ENCODE measurements at regions of chr19 and their contacts with region 1.

Region 1: DNA sequence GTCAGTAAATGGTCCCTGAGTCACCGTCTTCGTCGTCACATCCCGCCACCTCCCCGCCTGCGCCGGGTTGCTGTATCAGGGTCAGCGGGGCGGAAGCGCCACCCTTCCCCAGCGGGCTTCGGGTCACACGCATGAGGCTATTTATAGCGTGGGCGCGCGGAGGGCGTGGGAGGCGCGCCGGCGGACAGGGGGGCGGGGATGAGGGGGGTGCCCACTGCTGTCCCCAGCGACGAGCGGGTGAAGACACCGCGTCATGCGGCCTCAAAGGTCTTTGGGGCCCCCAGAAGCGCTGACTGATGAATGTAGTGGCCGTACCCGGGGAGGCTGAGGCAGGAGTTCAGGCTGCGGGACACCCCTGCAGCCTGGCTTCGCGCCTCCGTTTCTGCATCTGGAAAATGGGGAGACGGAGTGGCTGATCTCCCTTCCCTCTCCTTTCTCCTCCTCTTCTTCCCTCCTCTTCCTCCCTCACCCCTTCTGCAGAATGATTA is 7.9 kb downstream of the UNC13A start:
- DNase-seq: peak in 8 of 9 experiments; percentile 31 to 80 (median 54)
- ATAC-seq: peak; percentile 73
- H3K4me3 ChIP-seq: peak overlapping the region in 1 of 2 experiments; percentile 19
- H3K4me3 Mint-ChIP-seq: peak overlapping the region; percentile 22
- H3K27ac ChIP-seq: no peak overlapping the region
- H3K27ac Mint-ChIP-seq: no peak overlapping the region
- H3K4me1 ChIP-seq: peaks cover 9% of the 10 kb centered on the region
- H3K4me1 Mint-ChIP-seq: peaks cover 8% of the 10 kb centered on the region
- H3K27me3 ChIP-seq: peaks cover 23% of the 10 kb centered on the region in 2 experiments
- H3K27me3 Mint-ChIP-seq: peaks cover 62% of the 10 kb centered on the region
- CTCF ChIP-seq: no peak

Region 2: GRCh38 chr19:17599780-17600179 is 80.5 kb before region 1 on chr19:
- CTCF ChIA-PET with region 1: no interaction called
- POLR2A ChIA-PET with region 1: no interaction called
- intact Hi-C with region 1: no loop called
- DNase-seq: no peak
- ATAC-seq: no peak
- H3K4me3 ChIP-seq: no peak overlapping the region
- H3K4me3 Mint-ChIP-seq: no peak overlapping the region
- H3K27ac ChIP-seq: no peak overlapping the region
- H3K27ac Mint-ChIP-seq: no peak overlapping the region
- H3K4me1 ChIP-seq: no peaks in the 10 kb centered on the region
- H3K4me1 Mint-ChIP-seq: no peaks in the 10 kb centered on the region
- H3K27me3 ChIP-seq: peaks cover 6 to 7% of the 10 kb centered on the region in 2 experiments
- H3K27me3 Mint-ChIP-seq: peaks cover 42% of the 10 kb centered on the region
- CTCF ChIP-seq: no peak

Region 3: DNA sequence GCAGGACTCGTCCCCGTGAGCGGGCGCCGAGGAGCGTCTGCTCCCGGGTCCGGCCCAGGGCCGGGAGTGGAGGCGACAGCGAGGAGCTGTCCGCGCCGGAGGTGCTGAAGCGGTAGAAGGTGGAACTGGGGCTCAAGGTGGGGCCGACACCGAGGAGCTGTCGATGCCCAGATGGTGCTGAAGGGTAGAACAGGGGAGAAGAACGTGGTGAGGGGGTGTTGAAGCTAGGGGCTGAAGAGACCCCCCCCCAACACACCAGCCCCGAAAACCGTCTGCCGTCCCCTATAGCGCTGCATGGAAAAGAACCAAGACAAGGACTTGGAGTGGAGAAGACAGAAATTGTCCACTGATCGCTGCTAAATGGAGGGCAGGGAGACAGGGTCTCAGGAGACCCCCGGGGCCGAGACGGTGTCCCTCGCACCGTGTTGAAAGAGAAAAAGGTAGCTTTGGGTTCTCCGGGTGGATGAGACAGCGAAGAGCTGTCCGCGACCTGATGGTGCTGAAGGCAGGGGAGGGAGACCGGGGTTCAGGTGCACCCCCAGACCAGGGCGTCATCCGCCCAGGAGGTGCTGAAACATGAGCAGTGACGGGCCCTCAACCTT is 553.0 kb after region 1 on chr19:
- CTCF ChIA-PET with region 1: no interaction called
- POLR2A ChIA-PET with region 1: no interaction called
- intact Hi-C with region 1: loop called in 1 of 2 experiments (anchors 10 kb)
- DNase-seq: peak in 7 of 9 experiments; percentile 17 to 70 (median 56)
- ATAC-seq: peak; percentile 90
- H3K4me3 ChIP-seq: no peak overlapping the region
- H3K4me3 Mint-ChIP-seq: no peak overlapping the region
- H3K27ac ChIP-seq: no peak overlapping the region
- H3K27ac Mint-ChIP-seq: no peak overlapping the region
- H3K4me1 ChIP-seq: no peaks in the 10 kb centered on the region
- H3K4me1 Mint-ChIP-seq: no peaks in the 10 kb centered on the region
- H3K27me3 ChIP-seq: peaks cover 34 to 35% of the 10 kb centered on the region in 2 experiments
- H3K27me3 Mint-ChIP-seq: peaks cover 61% of the 10 kb centered on the region
- CTCF ChIP-seq: no peak

Region 4: DNA sequence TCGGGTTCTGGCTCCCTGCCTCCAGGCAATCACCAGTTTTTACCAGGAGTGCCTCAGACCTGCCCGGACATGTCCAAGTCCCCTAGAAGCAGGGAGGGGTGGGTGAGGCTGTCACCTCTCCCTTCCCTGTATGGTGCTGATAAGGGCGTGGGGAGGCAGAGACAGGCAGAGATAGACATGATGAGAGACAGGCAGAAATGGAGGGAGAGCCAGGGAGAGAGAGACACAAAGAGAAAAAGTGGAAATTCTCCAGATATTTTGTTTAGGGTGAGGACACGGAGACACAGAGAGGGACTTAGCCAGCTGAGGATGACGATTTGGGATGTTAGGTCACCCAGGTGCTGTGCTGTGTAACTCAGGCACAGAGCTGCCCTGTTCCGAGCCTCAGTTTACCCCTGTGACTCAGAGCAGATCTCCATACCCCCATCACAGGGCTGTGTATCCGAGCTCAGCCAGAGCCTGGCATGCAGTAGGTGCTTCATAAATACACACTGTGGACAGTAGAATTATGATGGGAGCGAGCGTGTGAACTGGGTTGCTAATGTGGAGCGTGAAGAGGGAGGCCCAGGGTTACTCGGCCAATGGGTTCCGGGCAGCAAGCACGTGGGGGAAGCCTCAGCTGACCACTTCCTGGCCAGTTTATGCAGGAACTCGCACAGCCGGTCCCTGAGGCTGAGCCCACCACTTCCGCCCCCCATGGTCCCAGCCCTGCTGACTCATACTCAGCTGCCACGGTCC is 693.8 kb after region 1 on chr19:
- CTCF ChIA-PET with region 1: no interaction called
- POLR2A ChIA-PET with region 1: no interaction called
- intact Hi-C with region 1: no loop called
- DNase-seq: peak in 8 of 9 experiments; percentile 23 to 74 (median 54)
- ATAC-seq: peak; percentile 40
- H3K4me3 ChIP-seq: no peak overlapping the region
- H3K4me3 Mint-ChIP-seq: no peak overlapping the region
- H3K27ac ChIP-seq: peak overlapping the region in 1 of 2 experiments; percentile 61
- H3K27ac Mint-ChIP-seq: no peak overlapping the region
- H3K4me1 ChIP-seq: peaks cover 10% of the 10 kb centered on the region
- H3K4me1 Mint-ChIP-seq: peaks cover 8% of the 10 kb centered on the region
- H3K27me3 ChIP-seq: no peaks in the 10 kb centered on the region
- H3K27me3 Mint-ChIP-seq: peaks cover 2% of the 10 kb centered on the region
- CTCF ChIP-seq: no peak